Activated CD4-positive, alpha-beta T cell treated with anti-CD3 and anti-CD28 coated beads, Interleukin-2, amount 10 ng/mL, durations not matched to agents 24 days and 14 days (primary cell): ENCODE measurements at regions of chr3 and their contacts with region 1.

Region 1: GRCh38 chr3:160707187-160707794 is 30.3 kb downstream of the ARL14 start:
- DNase-seq: peak; percentile 76
- H3K4me3 Mint-ChIP-seq: no peak overlapping the region
- H3K27ac Mint-ChIP-seq: no peak overlapping the region
- H3K4me1 Mint-ChIP-seq: no peaks in the 10 kb centered on the region
- H3K27me3 Mint-ChIP-seq: peaks cover 31% of the 10 kb centered on the region

Region 2: GRCh38 chr3:160725338-160725737 is 18.0 kb after region 1 on chr3:
- intact Hi-C with region 1: no loop called
- DNase-seq: no peak
- H3K4me3 Mint-ChIP-seq: no peak overlapping the region
- H3K27ac Mint-ChIP-seq: no peak overlapping the region
- H3K4me1 Mint-ChIP-seq: no peaks in the 10 kb centered on the region
- H3K27me3 Mint-ChIP-seq: peaks cover 18% of the 10 kb centered on the region

Region 3: DNA sequence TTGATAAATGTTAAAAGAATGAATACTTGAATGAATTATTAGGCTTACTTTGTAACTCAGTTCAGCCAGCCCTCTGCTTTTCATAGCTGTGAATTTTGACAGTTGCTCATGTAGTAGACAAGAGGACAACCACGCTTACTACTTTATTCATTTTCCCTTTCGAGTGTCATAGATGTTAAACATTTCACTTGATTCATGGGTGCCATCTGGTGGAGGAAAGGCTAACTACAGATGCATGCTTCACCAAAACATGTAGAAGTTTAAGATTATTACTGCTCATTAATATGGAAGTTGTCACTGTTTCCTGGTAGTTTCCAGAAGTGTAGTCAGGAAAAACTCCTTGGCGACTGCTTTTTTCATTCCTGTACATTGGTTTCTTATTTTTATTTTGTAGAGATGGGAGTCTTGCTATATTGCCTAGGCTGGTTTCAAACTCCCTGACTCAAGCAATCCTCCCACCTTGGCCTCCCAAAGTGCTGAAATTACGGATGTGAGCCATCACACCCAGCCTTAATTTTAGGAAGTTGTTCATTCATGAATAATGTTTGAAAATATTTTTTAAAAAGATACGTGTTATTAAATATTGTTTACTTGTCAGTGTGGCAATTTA is 234.7 kb after region 1 on chr3:
- intact Hi-C with region 1: loop called (anchors 1 kb)
- DNase-seq: peak; percentile 91
- H3K4me3 Mint-ChIP-seq: no peak overlapping the region
- H3K27ac Mint-ChIP-seq: no peak overlapping the region
- H3K4me1 Mint-ChIP-seq: peaks cover 2% of the 10 kb centered on the region
- H3K27me3 Mint-ChIP-seq: peaks cover 9% of the 10 kb centered on the region

Region 4: DNA sequence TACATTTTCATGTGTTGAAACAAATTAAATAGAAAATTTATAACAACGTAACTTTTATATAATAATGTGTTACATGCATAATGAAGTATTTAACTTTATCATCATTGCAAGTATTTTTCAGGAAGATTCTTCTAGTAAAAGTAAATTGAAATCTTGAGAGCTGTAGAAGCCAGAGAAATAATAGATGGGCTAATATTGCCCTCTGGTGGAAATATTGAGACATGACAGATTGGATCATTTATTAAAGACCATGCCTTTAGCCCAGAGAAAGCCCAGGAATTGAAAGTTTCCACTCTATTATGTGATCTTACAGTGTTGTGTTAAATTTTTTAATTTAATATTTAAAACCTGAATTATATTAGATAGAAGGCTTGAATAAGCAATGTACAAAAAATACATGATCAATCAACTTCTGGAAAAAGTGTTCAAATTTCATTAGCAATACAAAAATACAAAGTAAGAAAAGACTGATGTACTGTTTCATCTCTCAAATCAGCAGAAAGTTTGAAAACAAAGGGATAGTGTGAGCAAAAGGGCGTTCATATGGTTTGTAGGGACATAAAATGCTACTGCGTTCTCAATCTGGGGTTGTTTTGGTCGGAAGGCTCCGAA is 716.7 kb after region 1 on chr3:
- intact Hi-C with region 1: loop called (anchors 10 kb)
- DNase-seq: no peak
- H3K4me3 Mint-ChIP-seq: no peak overlapping the region
- H3K27ac Mint-ChIP-seq: no peak overlapping the region
- H3K4me1 Mint-ChIP-seq: no peaks in the 10 kb centered on the region
- H3K27me3 Mint-ChIP-seq: peaks cover 5% of the 10 kb centered on the region